ENCODE measurements at regions of chr6 and their contacts with region 1.

Region 1: GRCh38 chr6:43263314-43264178 is 20.3 kb downstream of the TTBK1 start:
- DNase-seq: no peak
- H3K4me3 ChIP-seq: no peak overlapping the region
- H3K27ac ChIP-seq: no peak overlapping the region
- H3K4me1 ChIP-seq: peaks cover 11 to 15% (median 14%) of the 10 kb centered on the region in 4 donors
- H3K27me3 ChIP-seq: no peaks in the 10 kb centered on the region
- CTCF ChIP-seq: peak; percentile 66 to 84 (median 80)
- EP300 ChIP-seq: no peak
- POLR2A ChIP-seq: no peak

Region 2: DNA sequence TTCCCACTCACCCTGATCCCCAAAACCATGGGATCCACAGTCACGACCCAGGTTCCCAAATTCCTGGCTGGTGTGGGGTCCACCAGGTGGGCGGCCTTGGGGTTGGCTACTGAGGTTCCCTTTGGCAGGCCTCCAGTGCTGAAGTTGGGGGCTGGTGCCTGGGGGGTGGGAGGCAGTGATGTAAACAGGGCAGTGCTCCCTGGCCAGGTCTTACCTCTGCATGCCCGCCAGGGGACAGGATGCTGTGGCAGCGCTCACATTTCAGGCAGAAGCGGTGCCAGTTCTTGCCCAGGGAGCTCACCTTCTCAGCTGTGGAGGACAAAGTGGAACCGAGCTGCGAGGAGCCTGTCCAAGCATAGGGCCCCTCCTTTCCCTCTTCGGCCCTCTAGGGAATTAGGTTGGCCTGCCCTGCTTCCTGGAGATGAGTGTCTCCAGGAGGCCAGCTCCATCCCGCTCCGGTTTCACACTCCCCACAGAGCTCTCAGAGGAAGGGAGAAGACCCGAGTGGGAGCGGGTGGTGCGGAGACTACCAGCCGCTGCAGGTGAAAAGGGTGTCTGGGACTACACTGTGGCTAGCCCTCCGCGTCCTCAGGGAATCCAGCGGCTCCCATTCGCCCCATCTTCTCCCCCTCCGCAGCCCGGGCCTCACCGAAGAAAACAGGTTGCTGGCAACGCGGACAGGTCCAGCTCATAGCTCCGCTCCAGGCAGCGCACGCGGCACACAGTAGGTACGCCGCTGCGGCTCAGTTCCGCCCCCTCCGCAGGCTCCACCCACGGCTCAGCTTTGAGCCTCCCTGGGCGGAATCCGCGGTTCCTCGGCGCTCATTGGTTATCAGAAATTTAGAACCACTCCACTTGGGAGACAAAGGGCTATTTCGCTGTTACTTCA is 44.8 kb after region 1 on chr6 and contains the start of gene CRIP3:
- intact Hi-C with region 1: no loop called
- DNase-seq: no peak
- H3K4me3 ChIP-seq: peak within 1 kb of the TSS; percentile 46 to 54 (median 52)
- H3K27ac ChIP-seq: no peak within 1 kb of the TSS
- H3K4me1 ChIP-seq: peaks cover 11 to 17% (median 15%) of the 10 kb centered on the region in 4 donors
- H3K27me3 ChIP-seq: peaks cover 0 to 25% (median 0%) of the 10 kb centered on the region in 4 donors
- CTCF ChIP-seq: no peak
- EP300 ChIP-seq: no peak
- POLR2A ChIP-seq: no peak
- total RNA-seq, gene CRIP3: not detected

Region 3: GRCh38 chr6:43334466-43335095 is 71.0 kb after region 1 on chr6:
- intact Hi-C with region 1: loop called (anchors 1 kb)
- DNase-seq: no peak
- H3K4me3 ChIP-seq: no peak overlapping the region
- H3K27ac ChIP-seq: no peak overlapping the region
- H3K4me1 ChIP-seq: peaks cover 0 to 7% (median 3%) of the 10 kb centered on the region in 4 donors
- H3K27me3 ChIP-seq: no peaks in the 10 kb centered on the region
- CTCF ChIP-seq: peak; percentile 57 to 60 (median 58)
- EP300 ChIP-seq: no peak
- POLR2A ChIP-seq: no peak

Region 4: GRCh38 chr6:43506667-43507471 is 243.3 kb after region 1 on chr6:
- intact Hi-C with region 1: loop called (anchors 5 kb)
- DNase-seq: peak; percentile 94
- H3K4me3 ChIP-seq: no peak overlapping the region
- H3K27ac ChIP-seq: peak overlapping the region in 1 of 4 donors; percentile 35
- H3K4me1 ChIP-seq: peaks cover 26 to 37% (median 29%) of the 10 kb centered on the region in 4 donors
- H3K27me3 ChIP-seq: peaks cover 0 to 6% (median 0%) of the 10 kb centered on the region in 4 donors
- CTCF ChIP-seq: peak; percentile 92 to 99 (median 95)
- EP300 ChIP-seq: no peak
- POLR2A ChIP-seq: no peak